CD8-positive, alpha-beta T cell (primary cell): ENCODE measurements at regions of chr2 and their contacts with region 1.

Region 1: DNA sequence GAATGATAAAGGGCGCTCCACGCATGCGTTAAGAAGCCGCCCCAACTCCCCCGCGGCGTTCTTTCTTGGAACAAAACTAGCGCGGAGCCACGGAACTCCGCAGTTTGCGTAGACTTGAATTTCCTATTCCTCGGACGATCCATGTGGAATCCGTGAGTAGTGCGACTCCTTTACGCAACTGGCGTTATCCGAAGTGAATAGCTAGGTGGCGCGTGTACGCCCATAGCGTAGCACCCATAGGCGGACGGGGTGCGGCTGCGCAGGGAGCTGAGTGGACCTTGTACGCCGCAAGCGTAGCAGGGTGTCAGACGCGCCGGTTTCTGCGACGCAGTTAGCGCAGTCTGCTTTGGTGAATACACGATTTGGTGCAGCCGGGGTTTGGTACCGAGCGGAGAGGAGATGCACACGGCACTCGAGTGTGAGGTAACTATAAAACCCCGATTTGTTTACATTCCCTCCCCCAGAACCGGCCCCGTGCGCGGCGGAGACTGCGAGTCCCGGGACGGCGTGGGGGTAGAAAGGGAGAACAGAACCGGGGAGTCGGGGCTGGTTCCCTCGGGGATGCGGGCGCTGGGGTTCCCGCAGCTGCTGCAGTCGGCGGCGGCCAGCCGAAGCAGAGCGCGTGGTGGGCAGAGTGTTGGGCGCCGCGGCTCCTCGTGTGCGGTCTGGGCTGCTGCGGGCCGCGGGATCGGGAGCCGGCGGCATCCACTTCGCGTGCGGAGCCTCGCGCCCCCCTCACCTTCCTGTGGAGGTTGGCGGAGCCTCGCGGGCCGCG is at the start of gene SLC39A10:
- DNase-seq: peak; percentile 94 to 100 (median 99)
- ATAC-seq: peak; percentile 83
- H3K4me3 ChIP-seq: peak within 1 kb of the TSS; percentile 57 to 96
- H3K4me3 Mint-ChIP-seq: peak within 1 kb of the TSS; percentile 96
- H3K27ac ChIP-seq: peak within 1 kb of the TSS; percentile 98
- H3K27ac Mint-ChIP-seq: peak within 1 kb of the TSS; percentile 100
- H3K4me1 ChIP-seq: peaks cover 12% of the 10 kb centered on the region
- H3K4me1 Mint-ChIP-seq: peaks cover 32% of the 10 kb centered on the region
- H3K27me3 ChIP-seq: no peaks in the 10 kb centered on the region
- H3K27me3 Mint-ChIP-seq: no peaks in the 10 kb centered on the region
- CTCF ChIP-seq: no peak
- total RNA-seq, gene SLC39A10: 35.0 to 36.3 TPM

Region 2: DNA sequence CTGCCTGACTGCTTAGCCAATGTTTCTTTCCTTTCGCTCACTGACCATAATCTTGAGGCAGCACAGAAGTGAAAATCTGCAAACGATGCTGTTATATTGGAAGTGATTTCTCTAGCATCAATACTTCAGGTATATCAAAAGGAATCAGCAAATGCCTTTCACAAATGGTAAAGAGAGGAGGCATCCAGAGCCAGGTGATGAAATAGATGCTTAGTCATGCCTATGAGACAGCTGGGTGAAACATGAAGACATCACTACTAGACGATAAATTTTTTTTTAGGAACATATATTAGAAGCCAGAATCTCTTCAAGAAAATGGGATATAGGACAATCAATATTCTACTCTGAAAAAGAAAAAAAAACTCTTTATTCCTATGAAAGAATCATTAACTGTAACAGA is 249.3 kb before region 1 on chr2:
- CTCF ChIA-PET with region 1: interaction called, 5 read pairs
- POLR2A ChIA-PET with region 1: no interaction called
- intact Hi-C with region 1: loop called (anchors 1 to 5 kb)
- DNase-seq: no peak
- ATAC-seq: no peak
- H3K4me3 ChIP-seq: no peak overlapping the region
- H3K4me3 Mint-ChIP-seq: no peak overlapping the region
- H3K27ac ChIP-seq: no peak overlapping the region
- H3K27ac Mint-ChIP-seq: no peak overlapping the region
- H3K4me1 ChIP-seq: no peaks in the 10 kb centered on the region
- H3K4me1 Mint-ChIP-seq: peaks cover 3% of the 10 kb centered on the region
- H3K27me3 ChIP-seq: no peaks in the 10 kb centered on the region
- H3K27me3 Mint-ChIP-seq: no peaks in the 10 kb centered on the region
- CTCF ChIP-seq: no peak

Region 3: DNA sequence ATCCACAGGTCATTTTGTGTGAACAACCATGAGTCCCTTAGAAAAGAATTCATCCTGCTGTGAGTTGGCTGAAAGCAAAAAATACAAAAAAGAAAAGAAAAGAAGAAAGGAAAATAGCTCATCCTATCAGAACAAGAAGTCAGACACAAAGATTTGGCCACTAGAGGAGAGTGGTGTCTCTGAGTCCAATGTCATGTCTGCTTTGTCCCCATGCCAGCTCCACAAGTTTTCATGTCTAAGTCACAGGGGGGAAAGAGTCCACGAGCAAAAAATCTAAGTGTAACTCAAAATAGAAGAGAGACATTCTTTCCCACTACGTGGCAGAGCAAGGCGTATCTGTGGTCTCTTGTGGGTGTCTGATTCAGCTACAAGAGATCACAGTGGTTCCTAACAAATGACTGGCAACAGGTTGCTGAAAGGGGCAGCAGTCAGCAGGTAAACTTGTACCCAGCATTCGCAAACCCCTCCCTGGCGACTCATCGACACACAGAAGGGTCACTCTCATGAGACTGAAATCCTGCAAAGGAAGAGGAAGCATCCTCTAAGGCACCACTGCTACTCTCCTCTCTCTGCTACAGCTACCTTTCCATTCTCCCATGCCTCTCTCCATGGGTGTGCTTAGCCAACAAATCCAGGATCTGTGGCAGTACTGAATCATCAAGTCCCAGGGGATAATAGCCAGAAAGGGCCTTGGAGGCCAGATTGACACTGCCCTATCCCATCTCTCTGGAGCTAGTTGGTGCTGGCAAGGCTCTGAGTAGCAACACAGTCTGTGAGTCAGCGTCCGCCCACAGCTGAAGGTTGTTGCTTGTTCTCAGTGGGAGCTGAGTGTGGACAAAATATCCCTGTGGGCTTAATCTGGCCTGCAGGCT is 123.0 kb before region 1 on chr2:
- CTCF ChIA-PET with region 1: interaction called, 87 read pairs
- POLR2A ChIA-PET with region 1: interaction called, 120 read pairs
- intact Hi-C with region 1: loop called (anchors 1 to 2 kb)
- DNase-seq: peak; percentile 7 to 70 (median 60)
- ATAC-seq: peak; percentile 63
- H3K4me3 ChIP-seq: peak overlapping the region; percentile 11 to 53
- H3K4me3 Mint-ChIP-seq: peak overlapping the region; percentile 79
- H3K27ac ChIP-seq: peak overlapping the region; percentile 52 to 66
- H3K27ac Mint-ChIP-seq: peak overlapping the region; percentile 98
- H3K4me1 ChIP-seq: peaks cover 79% of the 10 kb centered on the region
- H3K4me1 Mint-ChIP-seq: peaks cover 81% of the 10 kb centered on the region
- H3K27me3 ChIP-seq: no peaks in the 10 kb centered on the region
- H3K27me3 Mint-ChIP-seq: no peaks in the 10 kb centered on the region
- CTCF ChIP-seq: no peak

Region 4: GRCh38 chr2:195674491-195675221 is 17.6 kb after region 1 on chr2:
- CTCF ChIA-PET with region 1: interaction called, 21 read pairs
- POLR2A ChIA-PET with region 1: interaction called, 8 read pairs
- intact Hi-C with region 1: no loop called
- DNase-seq: no peak
- ATAC-seq: no peak
- H3K4me3 ChIP-seq: no peak overlapping the region
- H3K4me3 Mint-ChIP-seq: no peak overlapping the region
- H3K27ac ChIP-seq: no peak overlapping the region
- H3K27ac Mint-ChIP-seq: no peak overlapping the region
- H3K4me1 ChIP-seq: peaks cover 14% of the 10 kb centered on the region
- H3K4me1 Mint-ChIP-seq: peaks cover 57% of the 10 kb centered on the region
- H3K27me3 ChIP-seq: no peaks in the 10 kb centered on the region
- H3K27me3 Mint-ChIP-seq: no peaks in the 10 kb centered on the region
- CTCF ChIP-seq: no peak

Region 5: GRCh38 chr2:196337208-196337953 is 680.3 kb after region 1 on chr2:
- CTCF ChIA-PET with region 1: interaction called, 4 read pairs
- POLR2A ChIA-PET with region 1: no interaction called
- intact Hi-C with region 1: loop called in 1 of 2 experiments (anchors 5 kb)
- DNase-seq: peak in 4 of 9 experiments; percentile 13 to 58 (median 28)
- ATAC-seq: no peak
- H3K4me3 ChIP-seq: no peak overlapping the region
- H3K4me3 Mint-ChIP-seq: no peak overlapping the region
- H3K27ac ChIP-seq: no peak overlapping the region
- H3K27ac Mint-ChIP-seq: no peak overlapping the region
- H3K4me1 ChIP-seq: no peaks in the 10 kb centered on the region
- H3K4me1 Mint-ChIP-seq: peaks cover 3% of the 10 kb centered on the region
- H3K27me3 ChIP-seq: no peaks in the 10 kb centered on the region
- H3K27me3 Mint-ChIP-seq: peaks cover 3% of the 10 kb centered on the region
- CTCF ChIP-seq: peak; percentile 67

Region 6: DNA sequence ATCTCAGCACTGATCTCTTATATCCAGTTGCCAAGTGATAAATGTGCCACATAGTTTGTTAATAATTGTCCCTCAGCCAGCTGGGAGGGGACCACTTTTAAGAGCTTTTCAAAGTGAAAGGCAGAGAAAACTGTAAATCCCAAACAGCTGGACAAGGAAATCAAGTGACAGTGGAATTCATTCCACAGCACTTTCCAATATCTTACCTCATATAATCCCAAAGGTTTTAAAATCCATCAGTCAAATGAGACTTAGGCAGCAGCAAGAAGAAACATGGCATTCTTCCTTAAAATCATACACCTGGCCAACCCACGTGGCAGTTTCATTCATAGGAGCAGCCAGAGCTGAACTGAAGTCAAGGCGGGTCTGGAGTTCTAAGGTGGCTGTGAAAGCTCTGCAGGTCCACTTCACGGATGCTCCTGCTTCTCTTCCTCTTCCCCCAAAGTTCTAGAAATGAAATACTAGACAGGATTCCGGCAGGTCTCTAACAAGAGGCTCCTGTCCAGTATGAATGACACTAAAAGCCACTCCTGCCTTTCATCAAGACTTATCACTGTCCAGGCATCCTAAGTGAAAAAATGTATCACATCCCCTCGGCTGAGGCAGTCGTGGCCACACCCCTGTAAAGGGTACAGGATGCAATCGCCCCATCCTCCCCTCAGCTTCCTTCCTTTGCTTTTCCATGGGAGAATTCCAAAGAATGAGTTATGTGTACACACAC is 704.7 kb after region 1 on chr2:
- CTCF ChIA-PET with region 1: no interaction called
- POLR2A ChIA-PET with region 1: no interaction called
- intact Hi-C with region 1: no loop called
- DNase-seq: no peak
- ATAC-seq: no peak
- H3K4me3 ChIP-seq: no peak overlapping the region
- H3K4me3 Mint-ChIP-seq: no peak overlapping the region
- H3K27ac ChIP-seq: no peak overlapping the region
- H3K27ac Mint-ChIP-seq: no peak overlapping the region
- H3K4me1 ChIP-seq: no peaks in the 10 kb centered on the region
- H3K4me1 Mint-ChIP-seq: no peaks in the 10 kb centered on the region
- H3K27me3 ChIP-seq: no peaks in the 10 kb centered on the region
- H3K27me3 Mint-ChIP-seq: peaks cover 3% of the 10 kb centered on the region
- CTCF ChIP-seq: no peak

Region 7: GRCh38 chr2:197434541-197435513 is 1777.8 kb after region 1 on chr2 and contains the start of gene SF3B1:
- CTCF ChIA-PET with region 1: no interaction called
- POLR2A ChIA-PET with region 1: no interaction called
- intact Hi-C with region 1: loop called in 1 of 2 experiments (anchors 10 kb)
- DNase-seq: peak; percentile 98 to 100 (median 99)
- ATAC-seq: peak; percentile 96
- H3K4me3 ChIP-seq: peak within 1 kb of the TSS; percentile 95 to 99
- H3K4me3 Mint-ChIP-seq: peak within 1 kb of the TSS; percentile 100
- H3K27ac ChIP-seq: peak within 1 kb of the TSS; percentile 98 to 99
- H3K27ac Mint-ChIP-seq: peak within 1 kb of the TSS; percentile 100
- H3K4me1 ChIP-seq: peaks cover 43% of the 10 kb centered on the region
- H3K4me1 Mint-ChIP-seq: peaks cover 53% of the 10 kb centered on the region
- H3K27me3 ChIP-seq: no peaks in the 10 kb centered on the region
- H3K27me3 Mint-ChIP-seq: no peaks in the 10 kb centered on the region
- CTCF ChIP-seq: no peak
- total RNA-seq, gene SF3B1: 525 to 526 TPM